ENCODE measurements at regions of chr3 and their contacts with region 1.

Region 1: DNA sequence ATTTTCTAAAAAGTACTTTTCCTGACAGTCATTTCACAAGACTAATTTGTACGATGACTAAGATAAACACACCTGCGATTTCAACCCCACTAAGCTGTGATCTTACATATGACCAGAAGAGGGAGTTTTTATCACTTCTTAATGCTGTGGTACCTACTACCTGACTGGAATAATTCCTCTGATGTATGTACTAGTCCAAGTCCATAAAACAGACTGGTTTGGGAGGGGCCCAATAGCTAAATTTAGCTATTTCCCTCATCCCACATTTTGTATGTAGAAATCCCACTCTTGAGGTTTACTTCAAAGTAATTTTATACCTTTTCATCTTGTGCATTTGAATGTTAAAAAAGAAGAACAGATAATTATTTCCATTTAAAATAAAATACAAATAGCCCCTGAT is 49.7 kb upstream of the SCAANT1 start:
- DNase-seq: peak in 1 of 2 donors; percentile 79
- ATAC-seq: peak; percentile 85 to 97 (median 96)
- H3K4me3 ChIP-seq: no peak overlapping the region
- H3K4me3 Mint-ChIP-seq: no peak overlapping the region
- H3K27ac ChIP-seq: no peak overlapping the region
- H3K27ac Mint-ChIP-seq: no peak overlapping the region
- H3K4me1 ChIP-seq: peaks cover 6% of the 10 kb centered on the region
- H3K4me1 Mint-ChIP-seq: peaks cover 23 to 26% of the 10 kb centered on the region in 2 donors
- H3K27me3 ChIP-seq: no peaks in the 10 kb centered on the region
- H3K27me3 Mint-ChIP-seq: no peaks in the 10 kb centered on the region
- CTCF ChIP-seq: peak; percentile 80

Region 2: GRCh38 chr3:63975723-63976122 is 13.8 kb after region 1 on chr3:
- intact Hi-C with region 1: loop called (anchors 2 kb)
- DNase-seq: no peak
- ATAC-seq: no peak
- H3K4me3 ChIP-seq: no peak overlapping the region
- H3K4me3 Mint-ChIP-seq: no peak overlapping the region
- H3K27ac ChIP-seq: no peak overlapping the region
- H3K27ac Mint-ChIP-seq: peak overlapping the region; percentile 83 to 92
- H3K4me1 ChIP-seq: peaks cover 41% of the 10 kb centered on the region
- H3K4me1 Mint-ChIP-seq: peaks cover 86 to 93% of the 10 kb centered on the region in 2 donors
- H3K27me3 ChIP-seq: no peaks in the 10 kb centered on the region
- H3K27me3 Mint-ChIP-seq: no peaks in the 10 kb centered on the region
- CTCF ChIP-seq: no peak

Region 3: DNA sequence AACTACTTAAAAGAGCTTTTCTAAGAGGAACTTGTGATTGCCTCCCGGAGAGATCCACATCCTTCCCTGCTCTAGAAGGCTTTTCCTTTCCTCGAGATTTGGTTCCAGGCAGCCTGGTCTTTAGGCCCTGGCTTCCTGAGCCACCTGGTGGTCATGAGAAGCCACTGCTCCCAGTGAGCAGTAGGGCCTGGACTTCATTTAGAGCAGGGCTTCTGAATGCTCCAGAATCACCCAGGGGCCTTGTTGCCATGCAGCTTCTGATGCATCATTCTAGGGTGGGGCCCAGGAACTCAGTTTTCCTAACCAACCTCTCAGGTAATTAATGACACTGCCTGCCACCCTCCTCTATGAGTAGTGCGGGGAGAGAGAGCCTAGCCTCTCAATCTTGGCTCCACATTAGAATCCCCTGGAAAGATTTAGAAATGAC is 31.8 kb after region 1 on chr3:
- intact Hi-C with region 1: loop called (anchors 1 kb)
- DNase-seq: peak; percentile 44 to 81
- ATAC-seq: peak; percentile 80 to 98 (median 89)
- H3K4me3 ChIP-seq: no peak overlapping the region
- H3K4me3 Mint-ChIP-seq: no peak overlapping the region
- H3K27ac ChIP-seq: no peak overlapping the region
- H3K27ac Mint-ChIP-seq: peak overlapping the region; percentile 46 to 60
- H3K4me1 ChIP-seq: no peaks in the 10 kb centered on the region
- H3K4me1 Mint-ChIP-seq: peaks cover 4 to 15% of the 10 kb centered on the region in 2 donors
- H3K27me3 ChIP-seq: no peaks in the 10 kb centered on the region
- H3K27me3 Mint-ChIP-seq: no peaks in the 10 kb centered on the region
- CTCF ChIP-seq: peak; percentile 94

Measured in natural killer cell (primary cell).